ENCODE measurements at regions of chr21 and their contacts with region 1.

Region 1: GRCh38 chr21:32569261-32570230 is 15.8 kb downstream of the TCP10L start:
- DNase-seq: peak; percentile 81
- H3K4me3 ChIP-seq: peak overlapping the region; percentile 46 to 48
- H3K27ac ChIP-seq: peak overlapping the region; percentile 84 to 94
- H3K4me1 ChIP-seq: no peaks in the 10 kb centered on the region
- H3K27me3 ChIP-seq: no peaks in the 10 kb centered on the region
- CTCF ChIP-seq: peak; percentile 11 to 85 (median 83)
- POLR2A ChIP-seq: peak; percentile 55

Region 2: DNA sequence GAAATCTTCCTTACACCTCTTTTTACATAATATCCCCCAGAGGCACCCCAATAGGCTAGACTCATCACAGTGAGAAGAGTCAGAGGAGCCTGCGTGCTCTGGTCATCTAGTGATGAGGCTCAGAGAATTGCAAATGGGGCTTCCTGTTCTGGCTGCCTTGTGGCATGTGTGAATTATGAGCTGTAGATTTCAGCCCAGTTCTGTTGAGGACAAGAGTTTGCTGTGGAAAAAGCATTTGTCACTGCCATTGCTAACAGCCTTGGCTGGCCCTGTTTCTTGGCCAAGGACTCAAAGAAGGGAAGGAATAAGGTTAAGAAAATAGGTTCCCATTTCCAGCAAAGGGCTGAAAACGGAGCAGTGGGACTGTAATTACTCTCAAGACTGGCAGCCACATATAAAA is 240.2 kb before region 1 on chr21:
- intact Hi-C with region 1: loop called (anchors 10 kb)
- DNase-seq: no peak
- H3K4me3 ChIP-seq: no peak overlapping the region
- H3K27ac ChIP-seq: peak overlapping the region; percentile 38 to 46
- H3K4me1 ChIP-seq: no peaks in the 10 kb centered on the region
- H3K27me3 ChIP-seq: no peaks in the 10 kb centered on the region
- CTCF ChIP-seq: no peak
- POLR2A ChIP-seq: no peak

Region 3: GRCh38 chr21:32412162-32413014 is 157.2 kb before region 1 on chr21 and contains the start of gene EVA1C:
- intact Hi-C with region 1: loop called (anchors 5 kb)
- DNase-seq: peak; percentile 64
- H3K4me3 ChIP-seq: peak within 1 kb of the TSS; percentile 62 to 75
- H3K27ac ChIP-seq: peak within 1 kb of the TSS; percentile 98
- H3K4me1 ChIP-seq: peaks cover 15% of the 10 kb centered on the region
- H3K27me3 ChIP-seq: no peaks in the 10 kb centered on the region
- CTCF ChIP-seq: peak; percentile 14 to 73 (median 44)
- POLR2A ChIP-seq: peak; percentile 51
- total RNA-seq, gene EVA1C: 45.7 to 48.6 TPM

Region 4: DNA sequence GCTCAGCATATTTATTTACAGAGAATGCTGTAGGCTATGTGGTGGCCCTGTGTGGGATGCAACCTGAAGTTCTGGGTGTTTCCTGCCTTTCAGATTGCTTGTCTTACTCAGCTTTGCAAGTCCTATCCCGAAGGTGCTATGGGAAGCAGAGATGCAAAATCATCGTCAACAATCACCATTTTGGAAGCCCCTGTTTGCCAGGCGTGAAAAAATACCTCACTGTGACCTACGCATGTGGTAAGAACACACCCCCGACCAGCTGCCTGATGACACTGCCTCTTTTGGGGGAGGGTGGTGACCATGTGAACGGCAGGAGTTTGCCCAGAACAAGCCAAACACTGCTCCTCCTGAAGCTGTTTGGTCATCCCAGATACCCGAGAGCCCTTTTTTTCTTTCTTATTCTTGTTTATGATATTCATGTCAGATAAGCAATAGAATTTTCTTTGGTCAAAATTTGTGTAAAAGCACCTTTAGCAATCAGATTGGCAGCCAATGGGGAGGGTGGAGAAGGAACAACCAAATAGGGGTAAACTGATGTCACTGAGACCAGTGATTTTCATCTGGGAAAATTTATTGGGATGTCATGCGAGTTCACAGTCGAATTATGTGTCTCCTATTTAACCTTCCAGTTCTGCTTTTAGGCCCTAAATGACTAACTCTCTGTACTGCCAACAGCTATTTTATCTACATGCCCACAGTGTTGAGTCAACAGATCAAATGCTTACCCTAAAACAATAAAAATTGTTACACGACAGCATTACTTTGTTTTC is 74.4 kb before region 1 on chr21:
- intact Hi-C with region 1: loop called (anchors 10 kb)
- DNase-seq: peak; percentile 58
- H3K4me3 ChIP-seq: no peak overlapping the region
- H3K27ac ChIP-seq: peak overlapping the region; percentile 77 to 90
- H3K4me1 ChIP-seq: peaks cover 14% of the 10 kb centered on the region
- H3K27me3 ChIP-seq: no peaks in the 10 kb centered on the region
- CTCF ChIP-seq: no peak
- POLR2A ChIP-seq: no peak

Region 5: GRCh38 chr21:32940079-32941014 is 370.8 kb after region 1 on chr21:
- intact Hi-C with region 1: no loop called
- DNase-seq: peak; percentile 53
- H3K4me3 ChIP-seq: no peak overlapping the region
- H3K27ac ChIP-seq: no peak overlapping the region
- H3K4me1 ChIP-seq: no peaks in the 10 kb centered on the region
- H3K27me3 ChIP-seq: peaks cover 3% of the 10 kb centered on the region
- CTCF ChIP-seq: peak; percentile 49 to 72 (median 68)
- POLR2A ChIP-seq: no peak

Measured in prostate gland (tissue), 2 donors.